Adrenal gland (tissue), 19 donors: ENCODE measurements at regions of chr11 and their contacts with region 1.

Region 1: GRCh38 chr11:15208378-15209222 is 93.9 kb downstream of the INSC start:
- DNase-seq: peak; percentile 55 to 80 (median 72)
- H3K4me3 ChIP-seq: no peak overlapping the region
- H3K27ac ChIP-seq: no peak overlapping the region
- H3K4me1 ChIP-seq: no peaks in the 10 kb centered on the region
- H3K27me3 ChIP-seq: no peaks in the 10 kb centered on the region
- CTCF ChIP-seq: peak; percentile 74 to 90 (median 85)
- POLR2A ChIP-seq: no peak

Region 2: DNA sequence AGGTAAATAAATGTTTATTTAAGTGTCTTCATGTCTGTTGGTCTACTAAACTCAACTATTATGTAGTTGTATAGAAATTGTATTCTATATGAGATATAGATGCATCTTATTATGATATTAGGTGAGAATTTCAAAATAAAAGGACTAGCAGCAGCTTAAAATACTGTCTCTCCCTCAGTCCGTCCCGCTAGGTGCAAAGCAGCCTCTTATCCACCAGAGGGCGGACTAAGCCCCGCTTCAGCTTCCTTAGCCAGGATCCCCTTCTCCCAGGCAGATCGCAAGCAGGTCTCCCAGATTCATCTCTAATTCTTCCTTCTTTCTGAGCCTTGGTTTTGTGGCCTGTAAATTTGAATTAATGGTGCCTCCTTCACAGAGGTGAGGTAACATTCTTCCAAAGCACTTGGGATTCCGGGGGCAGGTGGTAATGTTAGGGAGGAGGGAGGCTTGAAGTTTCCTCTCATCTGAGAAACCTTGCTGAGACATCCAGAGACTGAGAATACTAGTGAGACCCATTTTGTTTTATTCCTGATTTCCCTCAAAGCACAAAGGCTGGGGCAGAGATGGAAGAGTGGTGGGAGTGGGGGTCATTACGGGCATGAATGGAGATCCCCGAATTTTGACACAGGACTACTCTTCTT is 107.4 kb before region 1 on chr11:
- intact Hi-C with region 1: loop called (anchors 5 kb)
- DNase-seq: peak; percentile 45 to 79 (median 59)
- H3K4me3 ChIP-seq: no peak overlapping the region
- H3K27ac ChIP-seq: no peak overlapping the region
- H3K4me1 ChIP-seq: no peaks in the 10 kb centered on the region
- H3K27me3 ChIP-seq: peaks cover 4% of the 10 kb centered on the region
- CTCF ChIP-seq: peak; percentile 57 to 92 (median 78)
- POLR2A ChIP-seq: no peak

Region 3: DNA sequence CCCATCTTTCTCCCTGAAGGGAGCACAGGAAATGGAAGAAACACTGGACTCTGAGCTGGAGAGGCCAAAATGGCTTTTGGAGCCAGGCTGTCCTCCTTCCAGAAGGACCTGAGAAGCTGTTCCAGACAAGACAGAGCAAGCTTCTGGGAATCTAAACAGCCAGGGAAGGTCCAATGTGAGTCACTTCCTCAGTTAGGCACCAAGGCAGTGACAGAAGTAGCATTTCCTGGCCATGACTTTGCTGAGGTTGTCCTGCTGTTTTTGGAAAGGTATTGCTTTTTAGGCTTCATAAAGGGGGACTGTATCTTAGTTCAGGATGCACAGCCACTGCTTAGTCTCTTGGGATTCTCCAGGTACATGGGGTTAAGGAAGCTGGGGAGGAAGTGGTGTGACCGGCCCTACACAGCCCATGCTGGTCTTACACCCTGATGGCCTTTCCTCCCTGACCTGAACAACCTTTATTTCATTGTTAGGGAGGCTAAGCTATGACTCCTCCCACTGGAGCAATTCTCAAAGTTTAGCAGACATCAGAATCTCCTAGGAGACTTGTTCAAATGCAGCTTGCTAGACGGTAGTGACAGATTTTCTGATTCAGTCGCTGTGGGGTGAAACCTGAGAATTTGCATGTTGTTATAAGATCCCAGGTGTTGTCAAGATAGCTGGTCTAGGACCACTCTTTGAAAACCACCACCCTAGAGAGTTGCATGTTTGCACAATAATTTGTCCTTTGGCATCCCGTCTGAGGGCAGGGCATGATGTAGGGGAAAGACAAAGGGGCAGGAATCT is 100.7 kb before region 1 on chr11:
- intact Hi-C with region 1: loop called (anchors 5 kb)
- DNase-seq: no peak
- H3K4me3 ChIP-seq: no peak overlapping the region
- H3K27ac ChIP-seq: no peak overlapping the region
- H3K4me1 ChIP-seq: no peaks in the 10 kb centered on the region
- H3K27me3 ChIP-seq: no peaks in the 10 kb centered on the region
- CTCF ChIP-seq: no peak
- POLR2A ChIP-seq: no peak

Region 4: DNA sequence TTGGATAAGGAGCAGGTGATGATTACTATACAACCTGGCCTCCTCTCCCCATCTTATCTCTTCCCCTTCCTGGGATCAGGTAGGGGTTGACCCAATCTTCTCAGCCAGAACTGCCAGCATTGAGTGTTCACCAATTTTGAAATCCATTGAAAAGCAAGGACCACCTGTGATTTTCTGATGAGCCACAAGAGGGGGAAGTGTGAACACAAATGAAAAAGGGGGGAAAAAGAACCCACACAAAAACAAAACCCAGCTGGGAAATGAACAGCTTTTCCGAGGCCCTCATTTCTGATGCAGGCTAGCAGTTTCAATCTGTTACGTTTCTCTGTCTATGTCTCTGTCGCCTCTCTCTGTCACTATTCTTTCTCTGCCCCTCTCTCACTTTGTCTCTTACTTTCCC is 68.0 kb after region 1 on chr11:
- intact Hi-C with region 1: no loop called
- DNase-seq: no peak
- H3K4me3 ChIP-seq: no peak overlapping the region
- H3K27ac ChIP-seq: no peak overlapping the region
- H3K4me1 ChIP-seq: no peaks in the 10 kb centered on the region
- H3K27me3 ChIP-seq: no peaks in the 10 kb centered on the region
- CTCF ChIP-seq: peak in 3 of 6 experiments; percentile 22 to 37 (median 31)
- POLR2A ChIP-seq: no peak

Region 5: GRCh38 chr11:15390857-15391256 is 182.3 kb after region 1 on chr11:
- intact Hi-C with region 1: no loop called
- DNase-seq: no peak
- H3K4me3 ChIP-seq: no peak overlapping the region
- H3K27ac ChIP-seq: no peak overlapping the region
- H3K4me1 ChIP-seq: no peaks in the 10 kb centered on the region
- H3K27me3 ChIP-seq: no peaks in the 10 kb centered on the region
- CTCF ChIP-seq: no peak
- POLR2A ChIP-seq: no peak